Activated naive CD4-positive, alpha-beta T cell treated with anti-CD3 and anti-CD28 coated beads for 36 hours (primary cell): ENCODE measurements at regions of chr5 and their contacts with region 1.

Region 1: GRCh38 chr5:43484106-43484849 is 613 bp upstream of the TMEM267 start:
- DNase-seq: peak; percentile 92
- H3K4me3 Mint-ChIP-seq: peak overlapping the region; percentile 97
- H3K27ac Mint-ChIP-seq: peak overlapping the region; percentile 99
- H3K4me1 Mint-ChIP-seq: peaks cover 45% of the 10 kb centered on the region
- H3K27me3 Mint-ChIP-seq: no peaks in the 10 kb centered on the region

Region 2: GRCh38 chr5:42908509-42909488 is 575.5 kb before region 1 on chr5:
- CTCF ChIA-PET with region 1: interaction called, 3 read pairs
- intact Hi-C with region 1: loop called (anchors 5 kb)
- DNase-seq: peak; percentile 94
- H3K4me3 Mint-ChIP-seq: peak overlapping the region; percentile 92
- H3K27ac Mint-ChIP-seq: peak overlapping the region; percentile 75
- H3K4me1 Mint-ChIP-seq: peaks cover 10% of the 10 kb centered on the region
- H3K27me3 Mint-ChIP-seq: peaks cover 10% of the 10 kb centered on the region

Region 3: DNA sequence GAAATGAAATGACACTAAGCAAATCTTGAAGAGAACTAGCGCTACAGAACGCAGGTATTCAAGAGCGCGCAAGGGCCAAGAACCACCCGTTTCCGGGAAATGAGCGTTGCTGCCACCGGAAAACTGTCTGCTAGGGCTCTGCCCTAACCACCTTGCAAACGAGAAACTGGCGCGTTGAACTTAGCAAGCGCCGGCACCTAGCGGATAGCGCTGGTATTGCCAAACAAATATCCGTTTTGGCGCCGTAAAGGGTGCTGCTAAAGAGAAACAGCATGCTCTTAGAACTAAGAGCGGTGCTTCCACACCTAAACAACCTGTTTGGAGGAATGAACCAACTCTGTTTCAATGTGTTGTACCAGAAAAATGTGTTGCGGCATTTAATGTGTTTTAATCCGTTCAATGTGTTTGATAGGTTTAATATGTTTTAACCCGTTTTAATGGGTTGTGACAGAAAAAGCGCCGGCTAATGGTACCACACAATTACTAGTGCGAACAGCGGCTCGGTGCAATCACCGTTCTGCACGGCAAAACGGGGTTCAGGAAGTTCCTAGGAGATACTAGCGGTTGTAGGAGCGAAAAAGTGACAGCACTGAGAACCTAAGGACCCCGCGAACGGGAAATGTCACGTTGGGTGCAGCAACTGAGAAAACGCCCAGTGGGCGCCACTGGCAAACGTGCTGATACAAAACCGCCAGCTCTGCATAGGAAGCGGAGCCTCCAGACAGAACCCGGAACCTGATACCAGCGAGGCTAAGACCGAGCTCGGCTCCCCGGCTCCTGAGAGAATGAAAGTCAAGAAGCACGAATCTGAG is 443.8 kb before region 1 on chr5 and contains the start of gene ANXA2R:
- CTCF ChIA-PET with region 1: interaction called, 5 read pairs
- intact Hi-C with region 1: loop called (anchors 1 kb)
- DNase-seq: peak; percentile 98
- H3K4me3 Mint-ChIP-seq: peak within 1 kb of the TSS; percentile 96
- H3K27ac Mint-ChIP-seq: peak within 1 kb of the TSS; percentile 99
- H3K4me1 Mint-ChIP-seq: peaks cover 26% of the 10 kb centered on the region
- H3K27me3 Mint-ChIP-seq: no peaks in the 10 kb centered on the region
- total RNA-seq, gene ANXA2R: 6.0 to 6.5 TPM

Region 4: GRCh38 chr5:43110606-43111442 is 373.5 kb before region 1 on chr5:
- CTCF ChIA-PET with region 1: interaction called, 4 read pairs
- intact Hi-C with region 1: loop called (anchors 1 kb)
- DNase-seq: peak; percentile 81
- H3K4me3 Mint-ChIP-seq: no peak overlapping the region
- H3K27ac Mint-ChIP-seq: peak overlapping the region; percentile 71
- H3K4me1 Mint-ChIP-seq: peaks cover 43% of the 10 kb centered on the region
- H3K27me3 Mint-ChIP-seq: no peaks in the 10 kb centered on the region

Region 5: GRCh38 chr5:43389679-43390329 is 94.5 kb before region 1 on chr5:
- CTCF ChIA-PET with region 1: interaction called, 16 read pairs
- intact Hi-C with region 1: no loop called
- DNase-seq: peak; percentile 72
- H3K4me3 Mint-ChIP-seq: no peak overlapping the region
- H3K27ac Mint-ChIP-seq: no peak overlapping the region
- H3K4me1 Mint-ChIP-seq: peaks cover 32% of the 10 kb centered on the region
- H3K27me3 Mint-ChIP-seq: no peaks in the 10 kb centered on the region

Region 6: GRCh38 chr5:43602461-43603343 is 118.4 kb after region 1 on chr5 and contains the start of gene NNT:
- CTCF ChIA-PET with region 1: interaction called, 4 read pairs
- intact Hi-C with region 1: loop called (anchors 1 kb)
- DNase-seq: peak; percentile 74
- H3K4me3 Mint-ChIP-seq: peak within 1 kb of the TSS; percentile 87
- H3K27ac Mint-ChIP-seq: peak within 1 kb of the TSS; percentile 92
- H3K4me1 Mint-ChIP-seq: peaks cover 45% of the 10 kb centered on the region
- H3K27me3 Mint-ChIP-seq: no peaks in the 10 kb centered on the region
- total RNA-seq, gene NNT: 98.4 to 98.9 TPM